BJ (cell line): ENCODE measurements at regions of chr10 and their contacts with region 1.

Region 1: DNA sequence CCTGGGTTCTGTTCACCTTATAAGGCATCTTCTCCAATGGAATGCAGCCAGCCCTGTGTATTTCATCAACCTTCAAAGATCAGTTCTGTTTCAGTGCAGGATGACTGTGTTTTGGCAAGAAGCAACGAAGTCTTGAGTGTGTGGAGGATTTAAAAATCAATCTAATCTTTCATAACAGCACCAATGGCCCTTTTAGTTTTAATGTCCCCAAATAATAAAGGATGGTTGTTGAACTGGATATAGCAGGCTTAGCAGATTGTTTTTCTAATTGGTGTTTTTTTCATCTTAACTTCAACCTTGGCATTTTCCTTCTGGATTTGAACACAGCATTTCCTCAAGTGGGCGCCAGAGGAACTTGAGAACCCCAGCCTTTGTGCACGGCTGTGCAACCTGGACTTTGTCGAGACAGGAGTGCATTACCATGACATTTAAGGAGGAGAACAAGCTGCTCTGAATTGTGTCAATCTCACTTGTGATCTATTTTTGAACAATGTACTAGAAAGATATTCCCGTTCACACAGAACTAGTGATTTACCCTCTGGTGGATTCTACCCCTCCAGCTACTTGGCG is 313.3 kb upstream of the AKR1E2 start:
- DNase-seq: no peak
- H3K4me3 ChIP-seq: no peak overlapping the region
- H3K27me3 ChIP-seq: no peaks in the 10 kb centered on the region
- CTCF ChIP-seq: peak; percentile 65

Region 2: GRCh38 chr10:3972460-3973301 is 540.1 kb before region 1 on chr10:
- CTCF ChIA-PET with region 1: no interaction called
- POLR2A ChIA-PET with region 1: no interaction called
- DNase-seq: no peak
- H3K4me3 ChIP-seq: no peak overlapping the region
- H3K27me3 ChIP-seq: no peaks in the 10 kb centered on the region
- CTCF ChIP-seq: no peak

Region 3: DNA sequence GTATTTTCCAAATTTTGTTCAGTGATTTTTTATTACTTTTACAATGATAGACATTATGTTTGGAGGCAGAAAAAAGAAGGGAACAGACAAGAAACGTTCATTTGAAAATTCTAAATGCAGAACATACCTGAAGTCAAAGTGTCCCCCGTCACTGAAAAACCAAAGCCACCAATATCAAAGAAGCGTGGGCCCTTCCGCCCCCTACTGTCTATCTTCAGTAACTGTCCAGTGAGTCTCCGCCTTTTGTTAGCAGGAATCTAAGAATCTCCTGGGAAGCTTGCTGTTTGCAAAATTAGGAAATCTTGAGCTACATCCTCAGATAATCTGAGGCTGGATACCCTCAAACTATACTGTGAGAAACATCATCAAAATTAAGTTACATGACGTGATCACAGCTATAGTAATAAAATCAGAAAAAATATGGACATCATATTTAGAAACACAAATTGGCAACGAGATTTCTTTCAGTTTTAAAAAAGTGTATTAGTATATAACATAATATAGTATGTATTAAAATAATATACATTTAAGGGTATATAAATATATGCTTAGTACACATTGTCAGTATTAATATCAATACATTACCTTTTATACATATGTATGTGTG is 143.9 kb after region 1 on chr10:
- CTCF ChIA-PET with region 1: interaction called, 14 read pairs
- POLR2A ChIA-PET with region 1: no interaction called
- DNase-seq: no peak
- H3K4me3 ChIP-seq: no peak overlapping the region
- H3K27me3 ChIP-seq: no peaks in the 10 kb centered on the region
- CTCF ChIP-seq: peak; percentile 90

Region 4: GRCh38 chr10:4807761-4808507 is 295.2 kb after region 1 on chr10:
- CTCF ChIA-PET with region 1: no interaction called
- POLR2A ChIA-PET with region 1: no interaction called
- DNase-seq: peak; percentile 65
- H3K4me3 ChIP-seq: no peak overlapping the region
- H3K27me3 ChIP-seq: no peaks in the 10 kb centered on the region
- CTCF ChIP-seq: no peak